ENCODE measurements at regions of chr10 and their contacts with region 1.

Region 1: DNA sequence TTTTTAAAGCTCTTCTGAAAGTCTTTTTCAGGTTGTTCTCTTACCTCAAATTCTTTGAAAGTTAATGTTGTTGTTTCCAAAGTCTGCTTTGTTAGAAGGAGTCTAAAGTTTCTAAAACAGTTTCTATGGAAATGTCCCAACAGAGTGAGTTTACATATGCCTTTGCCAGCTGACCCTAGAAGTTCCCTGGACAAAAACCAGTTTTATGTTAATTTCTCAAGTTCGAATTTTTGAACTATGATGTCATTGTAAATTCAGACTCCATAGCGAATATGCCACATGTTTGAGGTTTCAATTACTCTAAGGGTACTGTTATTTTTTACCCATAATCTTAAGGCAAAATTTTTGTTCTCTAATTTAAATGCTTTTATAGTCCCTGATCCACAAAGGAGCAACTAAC is 211.6 kb upstream of the PTER start:
- DNase-seq: no peak
- ATAC-seq: no peak
- H3K4me3 ChIP-seq: no peak overlapping the region
- H3K27ac ChIP-seq: no peak overlapping the region
- H3K4me1 ChIP-seq: no peaks in the 10 kb centered on the region
- H3K27me3 ChIP-seq: no peaks in the 10 kb centered on the region
- CTCF ChIP-seq: no peak

Region 2: GRCh38 chr10:16341637-16342036 is 116.4 kb after region 1 on chr10:
- intact Hi-C with region 1: loop called (anchors 5 kb)
- DNase-seq: no peak
- ATAC-seq: no peak
- H3K4me3 ChIP-seq: no peak overlapping the region
- H3K27ac ChIP-seq: no peak overlapping the region
- H3K4me1 ChIP-seq: no peaks in the 10 kb centered on the region
- H3K27me3 ChIP-seq: no peaks in the 10 kb centered on the region
- CTCF ChIP-seq: no peak

Region 3: DNA sequence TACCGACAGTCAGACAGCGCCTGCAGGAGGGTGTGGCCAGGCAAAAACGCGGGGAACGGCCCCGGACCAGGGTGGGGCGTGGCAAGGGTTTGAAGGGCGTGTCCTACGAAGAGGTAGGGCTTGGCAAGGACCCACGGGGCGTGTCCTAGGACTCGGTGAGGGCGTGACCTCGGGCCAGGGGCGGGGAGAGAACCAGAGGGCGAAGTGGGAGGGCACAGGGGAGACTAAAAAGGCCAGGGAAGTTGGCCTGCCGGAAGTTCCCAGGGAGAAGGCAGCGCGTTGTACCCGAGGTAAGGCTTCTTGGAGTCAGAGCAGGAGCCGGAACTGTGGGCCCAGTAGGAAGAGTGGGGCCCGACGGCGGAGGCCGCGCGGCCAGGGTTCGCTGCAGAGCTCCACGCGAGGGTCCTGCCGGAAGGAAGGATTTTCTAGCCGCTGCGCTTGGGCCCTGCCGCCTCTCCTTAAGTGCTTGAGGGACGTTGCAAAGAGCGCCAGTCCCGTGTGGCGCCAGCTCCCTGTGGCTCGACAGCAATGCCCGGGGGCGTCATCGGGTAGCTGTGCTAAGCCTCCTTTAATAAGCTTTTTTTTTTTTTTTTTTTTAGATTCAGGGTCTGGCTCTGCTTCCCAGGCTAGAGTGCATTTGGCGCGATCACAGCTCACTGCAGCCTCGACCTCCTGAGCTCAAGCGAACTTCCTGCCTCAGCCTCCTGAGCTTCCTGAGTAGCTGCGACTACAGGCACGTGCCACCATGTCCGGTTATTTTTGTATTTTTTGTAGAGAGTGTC is 211.7 kb after region 1 on chr10 and contains the start of gene PTER:
- intact Hi-C with region 1: no loop called
- DNase-seq: peak; percentile 98
- ATAC-seq: peak; percentile 98 to 100
- H3K4me3 ChIP-seq: peak within 1 kb of the TSS; percentile 70
- H3K27ac ChIP-seq: peak within 1 kb of the TSS; percentile 86
- H3K4me1 ChIP-seq: peaks cover 43% of the 10 kb centered on the region
- H3K27me3 ChIP-seq: no peaks in the 10 kb centered on the region
- CTCF ChIP-seq: no peak
- total RNA-seq, gene PTER: 20.3 TPM

Measured in lower lobe of right lung (tissue), 2 donors.